ENCODE measurements at regions of chr18 and their contacts with region 1.

Region 1: GRCh38 chr18:59837586-59837985 is 62.2 kb upstream of the PMAIP1 start:
- DNase-seq: peak; percentile 51
- H3K4me3 Mint-ChIP-seq: no peak overlapping the region
- H3K27ac Mint-ChIP-seq: no peak overlapping the region
- H3K4me1 Mint-ChIP-seq: peaks cover 11% of the 10 kb centered on the region
- H3K27me3 Mint-ChIP-seq: peaks cover 11% of the 10 kb centered on the region

Region 2: DNA sequence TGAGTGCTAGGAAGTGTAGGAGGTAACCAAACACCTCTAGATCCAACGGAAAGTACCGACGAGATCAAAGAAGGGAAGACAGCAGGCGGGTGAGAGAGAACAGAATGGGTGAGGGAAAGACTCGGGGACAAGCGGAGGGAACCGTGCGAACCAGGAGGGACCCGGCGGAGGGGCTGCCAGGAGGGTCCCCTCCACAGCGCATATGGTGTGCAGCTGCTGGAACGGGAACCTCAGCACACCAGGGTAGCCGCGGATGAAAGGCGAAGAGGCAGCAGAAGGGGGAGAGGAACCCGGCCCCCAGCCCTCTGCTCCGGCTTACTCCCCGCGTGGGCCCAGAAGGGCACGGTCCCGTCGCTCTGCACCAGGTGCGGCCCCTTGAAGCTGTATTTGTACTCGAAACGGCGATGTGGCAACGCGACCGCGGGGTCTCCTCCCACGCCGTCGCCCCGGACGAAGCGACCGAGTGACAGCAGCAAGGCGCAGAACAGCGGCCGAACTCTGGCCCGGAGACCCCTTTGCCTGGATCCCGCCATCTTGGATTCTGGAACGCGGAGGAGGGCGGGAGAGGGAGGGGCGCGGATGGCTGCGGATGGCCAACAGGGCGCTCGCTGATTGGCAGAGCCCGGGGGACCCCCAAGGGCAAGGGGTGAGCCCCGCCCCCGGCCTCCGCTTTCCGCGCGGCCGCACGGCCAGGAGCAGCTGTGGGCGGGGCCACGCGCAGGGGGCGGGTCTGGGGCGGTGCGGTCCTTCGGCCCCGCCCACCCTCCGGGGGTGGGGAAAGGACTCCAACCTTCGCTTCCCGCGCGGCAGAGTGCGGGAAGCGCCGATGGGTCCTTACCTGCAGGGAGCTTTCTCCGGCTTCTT is 478.6 kb before region 1 on chr18 and contains the start of gene LMAN1:
- CTCF ChIA-PET with region 1: no interaction called
- POLR2A ChIA-PET with region 1: no interaction called
- DNase-seq: peak; percentile 94
- H3K4me3 Mint-ChIP-seq: peak within 1 kb of the TSS; percentile 93
- H3K27ac Mint-ChIP-seq: peak within 1 kb of the TSS; percentile 91
- H3K4me1 Mint-ChIP-seq: peaks cover 35% of the 10 kb centered on the region
- H3K27me3 Mint-ChIP-seq: no peaks in the 10 kb centered on the region
- total RNA-seq, gene LMAN1: 102 to 104 TPM

Region 3: DNA sequence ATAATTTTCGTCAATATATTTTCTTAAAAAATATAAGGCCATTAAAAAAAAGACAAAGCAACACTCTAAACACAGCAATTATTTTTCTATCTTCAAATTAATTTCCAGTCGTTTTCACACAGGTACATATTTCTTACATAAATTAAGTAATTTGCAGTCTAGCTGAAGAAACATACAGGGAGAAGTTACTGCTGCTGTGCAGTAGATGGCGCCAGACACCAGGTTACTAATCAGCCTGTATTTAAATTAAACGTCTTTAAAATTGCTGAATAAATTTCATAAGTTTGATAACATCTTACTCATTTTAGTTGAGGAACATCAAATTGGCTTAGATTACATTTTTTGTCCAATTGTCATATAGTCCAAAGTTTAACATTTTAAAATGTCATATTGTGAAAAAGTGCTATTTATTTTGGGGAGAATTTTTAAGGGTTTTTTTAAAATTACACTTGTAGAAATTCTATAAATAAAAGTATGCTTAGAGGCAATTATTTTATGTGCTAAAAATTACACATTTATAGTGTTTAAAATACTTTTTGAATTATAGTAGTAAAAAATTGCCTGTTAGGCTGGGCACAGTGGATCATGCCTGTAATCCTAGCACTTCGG is 150.6 kb after region 1 on chr18:
- CTCF ChIA-PET with region 1: interaction called, 11 read pairs
- POLR2A ChIA-PET with region 1: no interaction called
- DNase-seq: peak; percentile 55
- H3K4me3 Mint-ChIP-seq: no peak overlapping the region
- H3K27ac Mint-ChIP-seq: no peak overlapping the region
- H3K4me1 Mint-ChIP-seq: no peaks in the 10 kb centered on the region
- H3K27me3 Mint-ChIP-seq: peaks cover 25% of the 10 kb centered on the region

Measured in activated CD4-positive, alpha-beta memory T cell treated with anti-CD3 and anti-CD28 coated beads, Interleukin-2, amount 10 ng/mL, durations not matched to agents 7 days and 5 days (primary cell).